ENCODE measurements at regions of chr6 and their contacts with region 1.

Region 1: GRCh38 chr6:108526739-108527174 is 34.0 kb upstream of the FOXO3 start:
- DNase-seq: no peak
- H3K4me3 ChIP-seq: no peak overlapping the region
- H3K27ac ChIP-seq: no peak overlapping the region
- H3K4me1 ChIP-seq: no peaks in the 10 kb centered on the region
- H3K27me3 ChIP-seq: no peaks in the 10 kb centered on the region
- CTCF ChIP-seq: peak; percentile 63 to 79 (median 70)
- POLR2A ChIP-seq: no peak

Region 2: DNA sequence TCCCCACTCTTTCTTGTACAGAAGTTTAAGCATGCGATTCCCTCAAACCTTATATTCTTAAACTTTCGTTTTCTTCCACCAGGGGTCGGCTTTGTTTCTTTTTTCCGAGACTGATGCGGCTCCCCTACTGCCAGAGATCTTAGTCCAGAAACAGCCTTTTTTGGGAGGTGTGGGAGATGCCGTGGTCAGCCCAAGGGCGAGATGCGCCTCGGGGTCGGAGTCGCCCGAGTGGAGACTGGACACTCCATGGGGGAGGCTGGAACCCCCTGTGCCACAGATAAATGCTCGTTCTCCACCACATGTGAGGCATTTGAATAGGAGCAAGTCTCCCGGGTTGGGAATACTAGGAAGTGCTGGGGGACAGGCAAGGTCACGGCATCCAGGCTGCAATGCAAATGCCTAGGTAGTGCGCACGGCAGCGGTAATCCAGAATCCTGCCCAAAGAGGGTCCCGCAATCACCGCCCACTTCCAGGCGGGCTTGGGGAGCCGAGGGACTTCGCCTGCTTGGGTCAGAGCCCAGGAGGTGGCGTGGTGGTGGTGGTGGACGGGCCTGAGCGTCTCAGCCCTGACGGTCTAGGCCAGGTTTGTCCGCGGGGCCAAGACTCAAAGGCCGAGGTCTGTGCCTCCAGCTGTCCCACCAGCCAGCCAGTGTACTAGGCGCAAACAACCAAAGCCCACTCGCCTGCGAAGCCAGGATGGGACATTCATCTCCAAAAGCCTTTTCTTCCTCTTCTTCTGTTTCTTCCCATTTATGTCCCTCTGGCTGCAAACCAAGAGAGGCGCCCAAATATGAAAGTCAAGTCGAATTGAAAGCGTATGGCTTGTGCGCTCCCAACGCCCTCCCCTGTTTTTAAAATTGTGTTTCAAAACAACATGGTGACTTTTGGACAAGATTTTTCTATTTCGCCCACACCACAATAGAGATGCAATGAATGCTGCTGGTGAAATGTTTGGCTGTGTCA is 412.9 kb before region 1 on chr6:
- intact Hi-C with region 1: loop called (anchors 10 kb)
- DNase-seq: peak in 1 of 2 donors; percentile 16
- H3K4me3 ChIP-seq: peak overlapping the region in 1 of 2 donors; percentile 23
- H3K27ac ChIP-seq: no peak overlapping the region
- H3K4me1 ChIP-seq: peaks cover 0 to 10% of the 10 kb centered on the region in 2 donors
- H3K27me3 ChIP-seq: peaks cover 10 to 16% of the 10 kb centered on the region in 2 donors
- CTCF ChIP-seq: peak; percentile 50 to 54 (median 50)
- POLR2A ChIP-seq: no peak

Measured in uterus (tissue), 4 donors.